CD14-positive monocyte (primary cell): ENCODE measurements at regions of chr12 and their contacts with region 1.

Region 1: GRCh38 chr12:106247674-106248311 is at the start of gene CKAP4:
- DNase-seq: peak; percentile 53 to 67 (median 65)
- H3K4me3 ChIP-seq: peak within 1 kb of the TSS; percentile 60 to 90 (median 77)
- H3K4me3 Mint-ChIP-seq: peak within 1 kb of the TSS; percentile 86 to 88
- H3K27ac ChIP-seq: peak within 1 kb of the TSS; percentile 99
- H3K27ac Mint-ChIP-seq: peak within 1 kb of the TSS; percentile 96 to 99 (median 98)
- H3K4me1 ChIP-seq: peaks cover 76 to 81% of the 10 kb centered on the region in 2 donors
- H3K4me1 Mint-ChIP-seq: peaks cover 74% of the 10 kb centered on the region
- H3K27me3 ChIP-seq: no peaks in the 10 kb centered on the region
- H3K27me3 Mint-ChIP-seq: peaks cover 0 to 4% (median 0%) of the 10 kb centered on the region in 3 donors
- CTCF ChIP-seq: no peak
- polyA plus RNA-seq, gene CKAP4: 46.9 to 59.4 (median 55.9) TPM

Region 2: GRCh38 chr12:106282457-106283097 is 34.8 kb after region 1 on chr12:
- intact Hi-C with region 1: loop called (anchors 5 kb)
- DNase-seq: peak; percentile 72 to 88 (median 83)
- H3K4me3 ChIP-seq: no peak overlapping the region
- H3K4me3 Mint-ChIP-seq: no peak overlapping the region
- H3K27ac ChIP-seq: peak overlapping the region in 1 of 2 donors; percentile 63
- H3K27ac Mint-ChIP-seq: peak overlapping the region; percentile 65 to 91 (median 87)
- H3K4me1 ChIP-seq: peaks cover 14 to 26% of the 10 kb centered on the region in 2 donors
- H3K4me1 Mint-ChIP-seq: peaks cover 35% of the 10 kb centered on the region
- H3K27me3 ChIP-seq: peaks cover 10 to 13% of the 10 kb centered on the region in 2 donors
- H3K27me3 Mint-ChIP-seq: peaks cover 14 to 29% (median 19%) of the 10 kb centered on the region in 3 donors
- CTCF ChIP-seq: peak; percentile 94

Region 3: GRCh38 chr12:106288494-106289195 is 40.9 kb after region 1 on chr12:
- intact Hi-C with region 1: loop called (anchors 5 kb)
- DNase-seq: peak; percentile 77 to 91 (median 91)
- H3K4me3 ChIP-seq: no peak overlapping the region
- H3K4me3 Mint-ChIP-seq: no peak overlapping the region
- H3K27ac ChIP-seq: peak overlapping the region in 1 of 2 donors; percentile 66
- H3K27ac Mint-ChIP-seq: peak overlapping the region in 5 of 7 donors; percentile 25 to 82 (median 66)
- H3K4me1 ChIP-seq: peaks cover 14 to 27% of the 10 kb centered on the region in 2 donors
- H3K4me1 Mint-ChIP-seq: peaks cover 38% of the 10 kb centered on the region
- H3K27me3 ChIP-seq: peaks cover 10 to 13% of the 10 kb centered on the region in 2 donors
- H3K27me3 Mint-ChIP-seq: peaks cover 10 to 20% (median 12%) of the 10 kb centered on the region in 3 donors
- CTCF ChIP-seq: no peak

Region 4: DNA sequence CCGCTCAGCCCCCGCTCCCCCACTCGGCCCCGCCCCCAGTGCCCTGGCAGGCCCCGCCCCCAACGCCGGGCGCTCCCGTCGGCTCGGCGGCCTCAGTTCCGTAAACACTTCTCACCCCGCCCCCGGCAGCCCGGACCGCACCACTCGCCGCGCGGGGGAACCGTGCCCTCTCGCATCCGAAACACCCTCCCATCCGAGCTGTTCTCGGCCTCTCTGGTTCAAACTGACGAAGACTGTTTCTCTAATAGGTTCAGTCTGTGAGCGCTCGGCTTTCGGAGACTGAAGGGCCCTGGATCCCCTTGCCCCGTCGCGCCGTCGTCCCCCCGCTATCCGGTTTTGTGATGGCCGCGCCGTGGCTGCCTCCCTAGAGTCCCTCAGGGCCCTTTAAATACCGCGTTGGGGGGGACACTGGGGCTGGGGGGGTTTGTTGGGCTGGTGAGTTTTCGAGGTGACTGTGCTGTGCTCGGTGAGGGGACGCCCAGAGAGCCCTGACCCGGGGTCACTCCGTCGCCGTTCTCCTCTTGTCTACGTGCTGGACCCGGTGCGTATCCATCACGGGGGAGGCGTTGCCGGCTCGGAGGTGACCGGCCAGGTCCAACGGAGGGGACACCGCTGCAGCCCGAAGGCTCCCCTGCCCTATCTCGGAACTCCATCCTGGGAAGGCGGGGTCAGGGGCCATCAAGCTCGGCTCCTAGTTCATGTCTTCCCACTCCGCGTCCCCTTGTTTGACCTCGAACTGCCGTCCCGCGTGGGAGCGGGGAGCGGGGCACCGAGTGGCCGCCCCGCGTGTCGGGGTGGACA is 54.8 kb after region 1 on chr12 and contains the start of gene TCP11L2:
- intact Hi-C with region 1: loop called (anchors 5 kb)
- DNase-seq: peak; percentile 80 to 83 (median 83)
- H3K4me3 ChIP-seq: peak within 1 kb of the TSS; percentile 74 to 87 (median 86)
- H3K4me3 Mint-ChIP-seq: peak within 1 kb of the TSS; percentile 86 to 92
- H3K27ac ChIP-seq: peak within 1 kb of the TSS; percentile 86 to 98
- H3K27ac Mint-ChIP-seq: peak within 1 kb of the TSS; percentile 98 to 100 (median 99)
- H3K4me1 ChIP-seq: peaks cover 41 to 48% of the 10 kb centered on the region in 2 donors
- H3K4me1 Mint-ChIP-seq: peaks cover 50% of the 10 kb centered on the region
- H3K27me3 ChIP-seq: no peaks in the 10 kb centered on the region
- H3K27me3 Mint-ChIP-seq: no peaks in the 10 kb centered on the region
- CTCF ChIP-seq: no peak
- polyA plus RNA-seq, gene TCP11L2: 23.5 to 37.3 (median 35.8) TPM

Region 5: DNA sequence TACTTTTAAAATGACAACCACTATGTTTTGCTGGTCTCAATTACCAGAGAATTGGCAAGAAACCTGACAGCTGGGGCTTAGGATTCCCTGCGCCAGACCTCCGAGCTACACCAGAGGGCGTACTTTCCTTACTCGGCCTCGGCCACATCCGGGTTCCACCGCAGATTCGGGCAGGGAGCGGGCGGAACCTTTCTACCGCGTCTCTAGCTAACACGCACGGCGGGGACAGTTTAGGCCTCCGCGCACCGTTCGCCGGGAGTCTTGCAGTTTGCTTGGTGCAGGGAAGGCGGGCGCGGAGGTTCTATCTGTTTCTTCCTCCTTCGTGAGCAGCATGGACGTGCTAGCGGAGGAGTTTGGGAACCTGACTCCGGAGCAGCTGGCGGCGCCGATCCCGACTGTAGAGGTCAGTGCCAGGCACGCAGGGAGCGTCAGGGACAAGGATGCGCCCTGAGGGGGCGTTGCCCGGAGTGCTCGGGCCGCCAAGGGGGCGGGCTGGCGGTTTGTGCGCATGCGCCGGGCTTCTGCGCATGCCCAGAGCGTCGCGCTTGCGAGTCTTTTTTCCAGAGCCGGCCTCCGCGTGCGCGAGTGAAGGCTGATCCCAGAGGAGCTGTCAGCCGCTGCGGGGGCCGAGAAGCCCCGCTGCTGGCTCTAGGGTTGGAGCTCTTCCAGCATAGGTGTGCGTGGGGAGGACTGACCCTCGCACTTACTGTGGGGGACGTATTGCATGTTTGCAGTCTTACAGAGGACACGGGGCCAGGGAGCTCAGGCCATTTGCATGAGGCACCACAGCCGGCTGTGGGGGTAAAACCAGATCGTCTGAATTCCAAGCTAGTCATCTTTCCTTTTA is 110.0 kb after region 1 on chr12 and contains the start of gene POLR3B:
- intact Hi-C with region 1: loop called in 1 of 2 experiments (anchors 5 kb)
- DNase-seq: peak; percentile 91 to 94 (median 91)
- H3K4me3 ChIP-seq: peak within 1 kb of the TSS; percentile 59 to 82 (median 65)
- H3K4me3 Mint-ChIP-seq: peak within 1 kb of the TSS; percentile 94 to 95
- H3K27ac ChIP-seq: peak within 1 kb of the TSS; percentile 75 to 83
- H3K27ac Mint-ChIP-seq: peak within 1 kb of the TSS; percentile 90 to 97 (median 94)
- H3K4me1 ChIP-seq: peaks cover 17 to 22% of the 10 kb centered on the region in 2 donors
- H3K4me1 Mint-ChIP-seq: peaks cover 18% of the 10 kb centered on the region
- H3K27me3 ChIP-seq: peaks cover 0 to 2% of the 10 kb centered on the region in 2 donors
- H3K27me3 Mint-ChIP-seq: peaks cover 5 to 13% (median 12%) of the 10 kb centered on the region in 3 donors
- CTCF ChIP-seq: peak; percentile 89
- polyA plus RNA-seq, gene POLR3B: 1.7 to 2.6 (median 2.0) TPM